Gastrocnemius medialis (tissue), 4 donors: ENCODE measurements at regions of chr3 and their contacts with region 1.

Region 1: DNA sequence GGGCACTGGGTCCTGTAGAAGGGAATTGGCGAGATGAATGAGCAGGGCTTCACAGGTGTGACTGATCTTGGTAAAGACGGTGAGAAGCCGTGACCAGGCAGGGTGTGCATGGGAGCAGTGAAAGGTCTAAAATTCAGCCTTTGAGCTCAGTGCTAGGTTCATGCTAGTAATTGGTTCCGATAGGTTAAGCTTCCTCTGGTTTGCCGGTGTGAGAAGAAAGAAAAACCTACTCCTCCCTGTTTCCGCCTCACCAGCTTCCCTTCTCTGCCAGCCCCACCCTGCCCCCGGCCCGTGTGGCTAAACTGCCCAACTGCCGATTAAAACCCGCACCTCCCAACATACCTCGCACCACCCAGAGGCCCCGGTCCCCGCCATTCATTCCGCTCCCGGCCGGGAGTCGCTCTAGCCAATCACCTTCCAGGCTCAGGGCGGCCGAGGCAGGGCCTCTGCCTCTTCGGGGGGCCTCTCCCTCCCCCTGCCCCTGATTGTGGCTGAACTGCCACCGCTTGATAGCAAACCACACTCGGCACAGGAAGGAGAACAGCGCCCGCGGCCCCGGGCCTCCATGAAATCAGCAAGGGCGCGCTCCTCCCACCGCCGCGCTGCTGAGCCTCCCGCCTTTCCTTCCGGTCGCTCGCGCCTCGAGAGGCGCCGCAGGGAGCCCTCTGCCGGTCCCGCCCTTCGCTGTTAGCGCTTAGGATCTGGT is 7.3 kb upstream of the NRROS start:
- DNase-seq: peak; percentile 58 to 69
- ATAC-seq: peak; percentile 89 to 92
- H3K4me3 ChIP-seq: peak overlapping the region; percentile 60 to 89 (median 72)
- H3K27ac ChIP-seq: peak overlapping the region; percentile 32 to 80 (median 70)
- H3K4me1 ChIP-seq: peaks cover 5% of the 10 kb centered on the region in 2 donors
- H3K27me3 ChIP-seq: peaks cover 0 to 2% (median 0%) of the 10 kb centered on the region in 3 donors
- CTCF ChIP-seq: peak in 2 of 5 experiments; percentile 47 to 61
- POLR2A ChIP-seq: peak in 1 of 2 donors; percentile 40

Region 2: GRCh38 chr3:196528639-196529233 is 103.5 kb before region 1 on chr3:
- in situ Hi-C with region 1: no loop called
- intact Hi-C with region 1: loop called (anchors 2 kb)
- DNase-seq: peak; percentile 27 to 41
- ATAC-seq: peak; percentile 90 to 95
- H3K4me3 ChIP-seq: peak overlapping the region; percentile 37 to 53 (median 44)
- H3K27ac ChIP-seq: peak overlapping the region in 1 of 4 donors; percentile 32
- H3K4me1 ChIP-seq: no peaks in the 10 kb centered on the region
- H3K27me3 ChIP-seq: peaks cover 0 to 5% (median 0%) of the 10 kb centered on the region in 3 donors
- CTCF ChIP-seq: peak; percentile 62 to 90 (median 75)
- POLR2A ChIP-seq: no peak

Region 3: GRCh38 chr3:196650740-196651311 is 18.6 kb after region 1 on chr3:
- in situ Hi-C with region 1: no loop called
- intact Hi-C with region 1: no loop called
- DNase-seq: no peak
- ATAC-seq: peak; percentile 81 to 90
- H3K4me3 ChIP-seq: no peak overlapping the region
- H3K27ac ChIP-seq: peak overlapping the region in 1 of 4 donors; percentile 17
- H3K4me1 ChIP-seq: peaks cover 0 to 5% of the 10 kb centered on the region in 2 donors
- H3K27me3 ChIP-seq: no peaks in the 10 kb centered on the region
- CTCF ChIP-seq: no peak
- POLR2A ChIP-seq: no peak

Region 4: GRCh38 chr3:196670339-196670738 is 38.1 kb after region 1 on chr3:
- in situ Hi-C with region 1: no loop called
- intact Hi-C with region 1: no loop called
- DNase-seq: peak in 1 of 2 donors; percentile 22
- ATAC-seq: peak in 1 of 2 donors; percentile 44
- H3K4me3 ChIP-seq: no peak overlapping the region
- H3K27ac ChIP-seq: peak overlapping the region in 1 of 4 donors; percentile 33
- H3K4me1 ChIP-seq: no peaks in the 10 kb centered on the region
- H3K27me3 ChIP-seq: peaks cover 0 to 9% (median 0%) of the 10 kb centered on the region in 3 donors
- CTCF ChIP-seq: no peak
- POLR2A ChIP-seq: no peak